B cell (primary cell): ENCODE measurements at regions of chr15 and their contacts with region 1.

Region 1: GRCh38 chr15:59492389-59493377 is 54.7 kb downstream of the FAM81A start:
- DNase-seq: peak; percentile 80
- ATAC-seq: peak; percentile 88
- H3K4me3 ChIP-seq: no peak overlapping the region
- H3K4me3 Mint-ChIP-seq: no peak overlapping the region
- H3K27ac ChIP-seq: no peak overlapping the region
- H3K27ac Mint-ChIP-seq: no peak overlapping the region
- H3K4me1 ChIP-seq: peaks cover 8% of the 10 kb centered on the region in 2 donors
- H3K4me1 Mint-ChIP-seq: peaks cover 9% of the 10 kb centered on the region
- H3K27me3 ChIP-seq: no peaks in the 10 kb centered on the region
- H3K27me3 Mint-ChIP-seq: no peaks in the 10 kb centered on the region
- CTCF ChIP-seq: peak; percentile 99

Region 2: GRCh38 chr15:58957101-58957973 is 535.3 kb before region 1 on chr15:
- CTCF ChIA-PET with region 1: interaction called, 28 read pairs
- POLR2A ChIA-PET with region 1: no interaction called
- intact Hi-C with region 1: loop called (anchors 1 kb)
- DNase-seq: peak; percentile 83
- ATAC-seq: peak; percentile 98
- H3K4me3 ChIP-seq: no peak overlapping the region
- H3K4me3 Mint-ChIP-seq: no peak overlapping the region
- H3K27ac ChIP-seq: no peak overlapping the region
- H3K27ac Mint-ChIP-seq: peak overlapping the region; percentile 64
- H3K4me1 ChIP-seq: peaks cover 3 to 7% of the 10 kb centered on the region in 2 donors
- H3K4me1 Mint-ChIP-seq: peaks cover 5% of the 10 kb centered on the region
- H3K27me3 ChIP-seq: no peaks in the 10 kb centered on the region
- H3K27me3 Mint-ChIP-seq: no peaks in the 10 kb centered on the region
- CTCF ChIP-seq: peak; percentile 83

Region 3: DNA sequence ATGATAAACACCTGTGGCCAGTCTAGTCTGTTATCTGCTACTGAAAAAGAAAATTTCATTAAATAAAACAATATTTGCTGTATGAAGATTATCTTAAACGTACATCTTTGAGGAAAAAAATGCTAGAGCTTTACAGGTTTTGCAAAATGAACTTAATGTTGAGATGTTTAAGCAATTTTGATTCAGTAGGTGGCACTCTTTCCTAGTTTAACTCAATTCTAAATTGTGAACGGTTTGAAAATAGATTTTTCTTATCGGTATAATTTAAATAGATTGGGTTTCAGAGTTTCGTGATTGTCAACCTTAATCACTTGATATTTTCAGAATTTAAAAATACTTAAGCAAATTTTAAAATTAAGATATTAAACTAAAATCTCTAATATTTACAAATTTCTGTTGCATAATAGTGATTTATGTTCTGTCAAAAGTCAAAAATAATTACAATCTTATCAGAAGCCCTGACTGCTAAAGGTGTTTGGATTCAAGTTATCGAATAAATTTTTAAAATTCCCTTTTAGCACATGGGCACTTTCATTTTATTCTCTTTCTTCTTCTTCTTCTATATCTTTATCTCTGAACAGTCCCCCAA is 512.2 kb before region 1 on chr15:
- CTCF ChIA-PET with region 1: interaction called, 21 read pairs
- POLR2A ChIA-PET with region 1: no interaction called
- intact Hi-C with region 1: loop called (anchors 1 kb)
- DNase-seq: peak; percentile 63
- ATAC-seq: no peak
- H3K4me3 ChIP-seq: no peak overlapping the region
- H3K4me3 Mint-ChIP-seq: peak overlapping the region; percentile 67
- H3K27ac ChIP-seq: peak overlapping the region; percentile 70 to 75
- H3K27ac Mint-ChIP-seq: peak overlapping the region; percentile 98
- H3K4me1 ChIP-seq: peaks cover 50 to 59% of the 10 kb centered on the region in 2 donors
- H3K4me1 Mint-ChIP-seq: peaks cover 49% of the 10 kb centered on the region
- H3K27me3 ChIP-seq: no peaks in the 10 kb centered on the region
- H3K27me3 Mint-ChIP-seq: no peaks in the 10 kb centered on the region
- CTCF ChIP-seq: peak; percentile 79

Region 4: GRCh38 chr15:59138243-59138642 is 354.4 kb before region 1 on chr15:
- CTCF ChIA-PET with region 1: interaction called, 13 read pairs
- POLR2A ChIA-PET with region 1: no interaction called
- intact Hi-C with region 1: no loop called
- DNase-seq: peak; percentile 74
- ATAC-seq: peak; percentile 97
- H3K4me3 ChIP-seq: no peak overlapping the region
- H3K4me3 Mint-ChIP-seq: no peak overlapping the region
- H3K27ac ChIP-seq: no peak overlapping the region
- H3K27ac Mint-ChIP-seq: peak overlapping the region; percentile 33
- H3K4me1 ChIP-seq: no peaks in the 10 kb centered on the region
- H3K4me1 Mint-ChIP-seq: peaks cover 4% of the 10 kb centered on the region
- H3K27me3 ChIP-seq: no peaks in the 10 kb centered on the region
- H3K27me3 Mint-ChIP-seq: no peaks in the 10 kb centered on the region
- CTCF ChIP-seq: peak; percentile 80

Region 5: GRCh38 chr15:59174835-59175831 is 317.6 kb before region 1 on chr15:
- CTCF ChIA-PET with region 1: interaction called, 47 read pairs
- POLR2A ChIA-PET with region 1: no interaction called
- intact Hi-C with region 1: loop called (anchors 1 kb)
- DNase-seq: peak; percentile 57
- ATAC-seq: peak; percentile 94
- H3K4me3 ChIP-seq: no peak overlapping the region
- H3K4me3 Mint-ChIP-seq: no peak overlapping the region
- H3K27ac ChIP-seq: no peak overlapping the region
- H3K27ac Mint-ChIP-seq: no peak overlapping the region
- H3K4me1 ChIP-seq: no peaks in the 10 kb centered on the region
- H3K4me1 Mint-ChIP-seq: peaks cover 7% of the 10 kb centered on the region
- H3K27me3 ChIP-seq: no peaks in the 10 kb centered on the region
- H3K27me3 Mint-ChIP-seq: no peaks in the 10 kb centered on the region
- CTCF ChIP-seq: peak; percentile 55

Region 6: DNA sequence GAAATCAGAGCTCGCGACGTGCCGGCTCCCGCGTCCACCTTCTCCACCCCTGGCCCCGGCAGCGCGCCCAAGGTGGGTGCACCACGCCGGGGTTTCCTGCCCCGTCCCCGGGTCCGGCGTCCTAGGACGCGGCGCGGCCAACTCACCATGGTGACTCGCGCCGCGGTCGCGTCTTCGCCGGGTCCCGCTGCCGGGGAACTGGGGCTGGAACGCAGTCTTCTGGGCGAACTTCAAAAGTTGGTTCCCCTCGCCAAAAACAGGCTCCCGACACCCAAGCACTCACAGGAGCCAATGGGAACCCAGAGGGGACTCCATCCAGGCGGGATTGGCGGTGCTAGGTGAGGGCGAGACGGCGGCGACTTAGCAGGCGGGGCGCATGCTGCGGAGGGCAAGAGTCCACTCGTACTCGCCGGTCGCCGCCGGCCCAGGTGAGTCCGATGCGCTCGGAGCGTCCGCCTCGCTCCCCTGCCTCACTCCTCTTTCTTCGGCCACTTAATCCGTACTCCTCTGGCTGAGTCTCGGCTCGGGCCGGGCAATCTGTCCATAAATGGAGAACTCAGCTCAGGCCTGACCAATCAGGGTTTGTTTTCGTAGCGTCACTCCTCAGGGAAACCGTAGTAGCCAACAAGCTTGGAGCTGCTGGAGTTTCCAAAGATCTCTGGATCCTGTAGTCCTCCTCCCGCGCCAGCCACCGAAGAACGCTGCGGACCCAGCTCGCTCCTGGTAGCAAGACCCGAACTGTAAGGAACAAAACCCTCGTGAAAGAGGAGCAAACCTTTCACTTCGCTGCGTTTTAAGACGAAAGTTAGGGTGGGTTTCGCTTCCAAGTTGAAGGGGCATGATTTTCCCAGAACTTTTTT is 120.1 kb before region 1 on chr15 and contains the start of gene MYO1E:
- CTCF ChIA-PET with region 1: interaction called, 40 read pairs
- POLR2A ChIA-PET with region 1: interaction called, 4 read pairs
- intact Hi-C with region 1: loop called (anchors 1 kb)
- DNase-seq: peak; percentile 73
- ATAC-seq: peak; percentile 62
- H3K4me3 ChIP-seq: peak within 1 kb of the TSS; percentile 63 to 98 (median 85)
- H3K4me3 Mint-ChIP-seq: peak within 1 kb of the TSS; percentile 99
- H3K27ac ChIP-seq: peak within 1 kb of the TSS; percentile 72 to 77
- H3K27ac Mint-ChIP-seq: peak within 1 kb of the TSS; percentile 94
- H3K4me1 ChIP-seq: peaks cover 35 to 37% of the 10 kb centered on the region in 2 donors
- H3K4me1 Mint-ChIP-seq: peaks cover 53% of the 10 kb centered on the region
- H3K27me3 ChIP-seq: no peaks in the 10 kb centered on the region
- H3K27me3 Mint-ChIP-seq: no peaks in the 10 kb centered on the region
- CTCF ChIP-seq: no peak
- total RNA-seq, gene MYO1E: 100.0 and 111 TPM in 2 replicates

Region 7: GRCh38 chr15:59516655-59517461 is 24.2 kb after region 1 on chr15:
- CTCF ChIA-PET with region 1: interaction called, 20 read pairs
- POLR2A ChIA-PET with region 1: no interaction called
- intact Hi-C with region 1: no loop called
- DNase-seq: peak; percentile 77
- ATAC-seq: peak; percentile 77
- H3K4me3 ChIP-seq: peak overlapping the region in 2 of 5 experiments; percentile 11 to 25
- H3K4me3 Mint-ChIP-seq: peak overlapping the region; percentile 70
- H3K27ac ChIP-seq: peak overlapping the region; percentile 93 to 94
- H3K27ac Mint-ChIP-seq: peak overlapping the region; percentile 95
- H3K4me1 ChIP-seq: peaks cover 63 to 68% of the 10 kb centered on the region in 2 donors
- H3K4me1 Mint-ChIP-seq: peaks cover 56% of the 10 kb centered on the region
- H3K27me3 ChIP-seq: no peaks in the 10 kb centered on the region
- H3K27me3 Mint-ChIP-seq: no peaks in the 10 kb centered on the region
- CTCF ChIP-seq: no peak

Region 8: GRCh38 chr15:59966262-59966661 is 473.6 kb after region 1 on chr15:
- CTCF ChIA-PET with region 1: no interaction called
- POLR2A ChIA-PET with region 1: no interaction called
- intact Hi-C with region 1: no loop called
- DNase-seq: no peak
- ATAC-seq: no peak
- H3K4me3 ChIP-seq: no peak overlapping the region
- H3K4me3 Mint-ChIP-seq: no peak overlapping the region
- H3K27ac ChIP-seq: no peak overlapping the region
- H3K27ac Mint-ChIP-seq: no peak overlapping the region
- H3K4me1 ChIP-seq: no peaks in the 10 kb centered on the region
- H3K4me1 Mint-ChIP-seq: no peaks in the 10 kb centered on the region
- H3K27me3 ChIP-seq: peaks cover 0 to 8% (median 1%) of the 10 kb centered on the region in 4 experiments
- H3K27me3 Mint-ChIP-seq: peaks cover 19% of the 10 kb centered on the region
- CTCF ChIP-seq: no peak